K562 (cell line): ENCODE measurements at regions of chr14 and their contacts with region 1.

Region 1: GRCh38 chr14:92106143-92106926 is at the start of gene ATXN3:
- DNase-seq: peak; percentile 96 to 97 (median 97)
- ATAC-seq: peak; percentile 91
- H3K4me3 ChIP-seq: peak within 1 kb of the TSS; percentile 87
- H3K27ac ChIP-seq: peak within 1 kb of the TSS; percentile 80
- H3K4me1 ChIP-seq: peaks cover 5 to 7% of the 10 kb centered on the region in 2 experiments; a peak in 4 of 5 replicates
- H3K27me3 ChIP-seq: no peaks in the 10 kb centered on the region
- CTCF ChIP-seq: peak; percentile 65 to 78 (median 71)
- EP300 ChIP-seq: no peak; the same call in 1 of the 2 replicates
- POLR2A ChIP-seq: peak; percentile 77
- RAD21 ChIP-seq: no peak
- polyA plus RNA-seq, gene ATXN3: 14.0 to 18.0 TPM

Region 2: DNA sequence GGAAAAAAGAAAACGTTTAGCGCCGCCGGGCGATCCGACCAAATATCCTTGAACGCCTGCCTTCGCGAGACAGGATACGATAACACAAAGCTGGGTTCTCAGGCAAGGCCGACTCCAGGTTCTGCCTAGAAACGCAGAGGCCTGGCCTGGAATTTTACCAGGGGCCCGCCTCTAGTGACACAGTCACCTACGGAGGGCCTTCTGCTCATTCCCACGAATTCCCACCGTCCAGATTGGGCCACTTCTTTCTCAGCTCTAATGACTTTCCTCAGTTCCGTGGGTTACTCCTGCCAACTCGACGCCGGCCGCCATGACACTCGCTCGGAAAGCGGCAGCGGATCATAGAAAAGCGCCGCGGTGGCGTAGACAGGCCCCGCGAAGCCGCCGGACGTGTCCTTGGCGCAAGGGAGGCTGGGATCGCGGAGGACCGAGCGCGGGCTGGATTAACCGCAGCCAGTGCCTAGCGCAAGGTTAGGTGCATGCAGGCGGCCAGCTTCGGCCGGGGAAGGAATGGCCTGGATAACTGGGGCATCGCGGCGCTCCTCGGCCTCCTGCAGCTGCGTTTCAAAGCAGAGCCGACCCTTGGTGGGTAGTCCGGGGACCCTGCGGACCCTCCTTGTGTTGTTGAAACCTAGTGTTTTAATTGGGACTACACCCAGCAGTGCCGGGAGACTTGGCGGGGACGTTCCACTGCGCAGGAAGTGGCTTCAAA is 66.5 kb before region 1 on chr14 and contains the start of gene TRIP11:
- CTCF ChIA-PET with region 1: no interaction called
- POLR2A ChIA-PET with region 1: interaction called, 9 read pairs
- in situ Hi-C with region 1: no loop called
- intact Hi-C with region 1: loop called (anchors 1 kb)
- DNase-seq: peak; percentile 76 to 91 (median 81)
- ATAC-seq: peak; percentile 98
- H3K4me3 ChIP-seq: peak within 1 kb of the TSS; percentile 94
- H3K27ac ChIP-seq: peak within 1 kb of the TSS; percentile 95
- H3K4me1 ChIP-seq: peaks cover 0 to 5% of the 10 kb centered on the region in 2 experiments; a peak in 1 of 5 replicates
- H3K27me3 ChIP-seq: no peaks in the 10 kb centered on the region
- CTCF ChIP-seq: no peak
- EP300 ChIP-seq: no peak
- POLR2A ChIP-seq: peak; percentile 97
- RAD21 ChIP-seq: no peak
- polyA plus RNA-seq, gene TRIP11: 7.4 to 14.6 TPM